OCI-LY7 (cell line): ENCODE measurements at regions of chrX and their contacts with region 1.

Region 1: DNA sequence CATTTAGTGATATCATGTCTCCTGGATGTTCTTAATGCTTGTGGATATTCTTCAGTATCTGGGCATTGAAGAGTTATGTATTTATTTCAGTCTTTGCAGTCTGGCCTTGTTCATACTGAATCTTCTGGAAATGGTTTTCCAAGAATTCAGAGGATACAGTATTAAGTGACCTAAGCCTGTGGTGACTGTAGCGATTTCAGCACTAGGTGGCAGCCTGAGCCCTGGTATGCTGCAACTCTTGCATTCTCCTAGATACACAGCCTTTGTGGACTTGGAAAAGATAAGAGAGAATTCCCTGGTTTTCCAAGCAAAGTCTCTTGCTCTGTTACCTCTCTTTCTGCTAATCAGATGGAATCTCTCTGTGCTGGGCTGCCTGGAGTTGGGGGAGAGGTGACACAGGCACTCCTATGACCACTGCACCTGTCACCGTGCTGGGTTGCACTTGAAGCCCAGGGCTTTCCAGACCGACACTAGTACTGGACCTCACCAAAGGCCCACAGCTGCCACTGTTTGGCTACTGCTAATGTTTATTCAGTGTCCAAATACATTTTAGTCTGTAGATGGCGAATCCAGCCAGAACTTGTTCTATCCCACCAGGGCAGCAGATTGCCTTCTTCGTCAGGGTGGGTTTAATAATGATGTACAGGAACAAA is 19.3 kb upstream of the SPIN2A start:
- DNase-seq: peak; percentile 20
- H3K4me3 ChIP-seq: no peak overlapping the region
- H3K27ac ChIP-seq: no peak overlapping the region
- H3K4me1 ChIP-seq: no peaks in the 10 kb centered on the region
- CTCF ChIP-seq: peak; percentile 69

Region 2: DNA sequence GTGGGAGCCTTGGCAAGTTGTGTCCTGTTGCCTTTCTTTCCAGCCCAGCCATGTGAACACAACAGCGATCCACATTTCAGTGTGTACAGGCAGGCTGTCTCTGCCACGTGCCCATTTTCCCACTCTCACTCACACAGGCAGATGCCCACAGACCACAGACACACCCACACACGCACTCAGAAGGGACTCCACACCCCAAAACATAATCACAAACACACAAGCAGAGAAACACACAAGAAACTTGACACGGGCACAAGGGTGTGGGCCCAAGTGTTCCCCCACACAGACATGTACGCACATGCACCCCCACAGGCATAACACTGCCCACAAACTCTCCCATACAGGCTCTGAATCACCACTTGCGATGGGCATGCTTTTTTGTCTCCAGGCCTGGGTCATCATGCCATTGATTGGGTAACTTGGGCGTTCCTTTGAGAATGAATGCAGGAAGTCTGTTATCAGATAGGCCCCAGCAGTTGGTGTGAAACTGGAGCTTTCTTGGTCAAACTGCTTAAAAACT is 343.1 kb before region 1 on chrX:
- CTCF ChIA-PET with region 1: no interaction called
- POLR2A ChIA-PET with region 1: no interaction called
- intact Hi-C with region 1: no loop called
- DNase-seq: no peak
- H3K4me3 ChIP-seq: no peak overlapping the region
- H3K27ac ChIP-seq: no peak overlapping the region
- H3K4me1 ChIP-seq: peaks cover 11% of the 10 kb centered on the region
- CTCF ChIP-seq: no peak

Region 3: DNA sequence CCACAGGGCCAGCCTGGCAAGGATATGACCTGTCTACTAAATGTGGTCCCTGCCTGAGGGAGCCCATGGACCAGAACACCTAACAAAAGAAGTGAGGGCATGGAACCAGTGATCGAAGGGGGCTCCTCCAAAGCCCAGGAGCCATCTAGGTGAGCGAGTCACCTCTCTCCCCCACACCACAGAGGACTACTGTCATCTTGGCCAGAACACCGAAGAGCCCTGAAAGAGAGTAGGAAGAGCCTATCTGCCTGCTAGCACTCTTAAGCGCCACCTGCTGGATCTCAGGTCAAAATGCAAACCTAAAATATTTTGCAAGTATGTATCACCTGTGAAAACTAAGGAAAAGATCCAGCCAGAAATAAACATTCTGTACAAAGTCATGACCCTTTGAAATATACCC is 297.4 kb after region 1 on chrX:
- CTCF ChIA-PET with region 1: no interaction called
- POLR2A ChIA-PET with region 1: no interaction called
- intact Hi-C with region 1: loop called (anchors 2 kb)
- DNase-seq: peak; percentile 56
- H3K4me3 ChIP-seq: no peak overlapping the region
- H3K27ac ChIP-seq: no peak overlapping the region
- H3K4me1 ChIP-seq: no peaks in the 10 kb centered on the region
- CTCF ChIP-seq: peak; percentile 79